Transverse colon (tissue), 4 donors: ENCODE measurements at regions of chr3 and their contacts with region 1.

Region 1: DNA sequence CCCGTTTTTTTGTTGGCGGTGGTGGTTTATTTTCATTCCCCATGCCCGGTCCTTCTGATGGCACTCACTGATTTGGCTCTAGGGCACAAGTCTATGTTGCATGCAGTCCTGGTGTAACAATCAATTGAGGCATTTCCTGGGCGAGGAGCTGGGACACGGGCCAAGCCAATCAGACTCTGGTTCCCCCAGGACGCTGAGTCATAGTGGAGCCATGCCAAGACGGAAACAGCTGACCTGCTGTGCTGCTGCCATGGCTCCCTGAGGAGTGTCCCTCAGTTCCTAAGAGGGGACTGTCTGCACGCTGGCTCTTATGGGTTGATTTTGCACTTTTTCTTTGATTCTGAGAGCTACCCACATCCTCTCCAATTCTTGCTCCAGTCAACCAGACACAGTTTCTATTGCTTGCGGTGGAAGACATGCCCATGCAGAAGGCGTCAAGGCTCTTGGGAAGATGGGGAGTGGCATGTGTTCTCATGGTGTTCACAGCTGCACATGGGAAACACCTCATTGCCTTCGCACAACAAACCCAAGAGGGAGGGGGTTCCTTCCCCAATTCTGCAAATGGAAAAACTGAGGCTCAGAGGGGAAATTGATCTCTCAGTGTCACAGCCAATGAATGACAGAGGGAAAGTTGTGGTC is 28.4 kb upstream of the ALDH1L1 start:
- DNase-seq: peak; percentile 85
- H3K4me3 ChIP-seq: no peak overlapping the region
- H3K27ac ChIP-seq: no peak overlapping the region
- H3K4me1 ChIP-seq: peaks cover 5 to 20% (median 7%) of the 10 kb centered on the region in 4 donors
- H3K27me3 ChIP-seq: peaks cover 14% of the 10 kb centered on the region
- CTCF ChIP-seq: no peak
- EP300 ChIP-seq: no peak
- POLR2A ChIP-seq: no peak

Region 2: GRCh38 chr3:126134219-126134975 is 74.3 kb before region 1 on chr3:
- in situ Hi-C with region 1: no loop called
- intact Hi-C with region 1: loop called (anchors 5 kb)
- DNase-seq: peak; percentile 65
- H3K4me3 ChIP-seq: no peak overlapping the region
- H3K27ac ChIP-seq: no peak overlapping the region
- H3K4me1 ChIP-seq: peaks cover 0 to 2% (median 0%) of the 10 kb centered on the region in 4 donors
- H3K27me3 ChIP-seq: peaks cover 4% of the 10 kb centered on the region
- CTCF ChIP-seq: peak; percentile 74 to 84 (median 82)
- EP300 ChIP-seq: no peak
- POLR2A ChIP-seq: no peak

Region 3: GRCh38 chr3:128155616-128156360 is 1947.1 kb after region 1 on chr3:
- in situ Hi-C with region 1: no loop called
- intact Hi-C with region 1: no loop called
- DNase-seq: no peak
- H3K4me3 ChIP-seq: no peak overlapping the region
- H3K27ac ChIP-seq: no peak overlapping the region
- H3K4me1 ChIP-seq: peaks cover 5 to 12% (median 10%) of the 10 kb centered on the region in 4 donors
- H3K27me3 ChIP-seq: no peaks in the 10 kb centered on the region
- CTCF ChIP-seq: no peak
- EP300 ChIP-seq: no peak
- POLR2A ChIP-seq: no peak